Tibial artery (tissue), 4 donors: ENCODE measurements at regions of chr3 and their contacts with region 1.

Region 1: DNA sequence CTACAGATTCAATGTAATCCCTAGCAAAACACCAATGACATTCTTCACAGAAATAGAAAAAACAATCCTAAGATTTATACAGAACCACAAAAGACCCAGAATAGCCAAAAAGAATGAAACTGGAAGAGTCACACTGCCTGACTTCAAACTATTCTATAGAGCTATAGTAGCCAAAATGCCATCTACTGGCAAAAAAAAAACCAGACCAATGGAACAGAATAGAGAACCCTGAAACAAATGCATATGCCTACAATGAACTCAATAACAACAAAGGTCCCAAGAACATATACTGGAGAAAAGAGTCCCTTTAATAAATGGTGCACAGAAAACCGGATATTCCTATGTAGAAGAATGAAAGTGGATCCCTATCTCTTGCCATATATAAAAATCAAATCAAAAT is 19.8 kb downstream of the PDCD10 start:
- DNase-seq: no peak
- H3K4me3 ChIP-seq: no peak overlapping the region
- H3K27ac ChIP-seq: no peak overlapping the region
- H3K4me1 ChIP-seq: no peaks in the 10 kb centered on the region
- H3K27me3 ChIP-seq: no peaks in the 10 kb centered on the region
- CTCF ChIP-seq: no peak

Region 2: DNA sequence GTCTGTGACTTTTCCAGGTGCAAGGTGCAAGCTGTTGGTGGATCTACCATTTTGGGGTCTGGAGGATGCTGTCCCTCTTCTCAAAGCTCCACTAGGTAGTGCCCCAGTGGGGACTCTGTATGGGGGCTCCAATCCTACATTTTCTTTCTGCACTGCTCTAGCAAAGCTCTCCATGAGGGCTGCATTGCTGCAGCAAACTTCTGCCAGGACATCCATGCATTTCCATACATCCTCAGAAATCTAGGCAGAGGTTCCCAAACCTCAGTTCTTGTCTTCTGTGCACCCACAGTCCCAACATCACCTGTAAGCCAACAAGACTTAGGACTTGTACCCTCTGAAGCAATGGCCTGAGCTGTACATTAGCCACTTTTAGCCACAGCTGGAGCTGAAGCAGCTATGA is 1183.1 kb before region 1 on chr3:
- intact Hi-C with region 1: loop called (anchors 5 kb)
- DNase-seq: no peak
- H3K4me3 ChIP-seq: no peak overlapping the region
- H3K27ac ChIP-seq: no peak overlapping the region
- H3K4me1 ChIP-seq: no peaks in the 10 kb centered on the region
- H3K27me3 ChIP-seq: no peaks in the 10 kb centered on the region
- CTCF ChIP-seq: no peak